Heart left ventricle (tissue), 16 donors: ENCODE measurements at regions of chr10 and their contacts with region 1.

Region 1: GRCh38 chr10:78972947-78973900 is 95.5 kb upstream of the ZMIZ1 start:
- DNase-seq: peak; percentile 86 to 91 (median 89)
- ATAC-seq: peak; percentile 45 to 80 (median 72)
- H3K4me3 ChIP-seq: peak overlapping the region; percentile 11 to 66 (median 54)
- H3K27ac ChIP-seq: peak overlapping the region; percentile 91 to 100 (median 98)
- H3K4me1 ChIP-seq: peaks cover 5 to 45% (median 30%) of the 10 kb centered on the region in 12 donors
- H3K27me3 ChIP-seq: no peaks in the 10 kb centered on the region
- CTCF ChIP-seq: no peak
- POLR2A ChIP-seq: peak in 1 of 2 donors; percentile 73

Region 2: DNA sequence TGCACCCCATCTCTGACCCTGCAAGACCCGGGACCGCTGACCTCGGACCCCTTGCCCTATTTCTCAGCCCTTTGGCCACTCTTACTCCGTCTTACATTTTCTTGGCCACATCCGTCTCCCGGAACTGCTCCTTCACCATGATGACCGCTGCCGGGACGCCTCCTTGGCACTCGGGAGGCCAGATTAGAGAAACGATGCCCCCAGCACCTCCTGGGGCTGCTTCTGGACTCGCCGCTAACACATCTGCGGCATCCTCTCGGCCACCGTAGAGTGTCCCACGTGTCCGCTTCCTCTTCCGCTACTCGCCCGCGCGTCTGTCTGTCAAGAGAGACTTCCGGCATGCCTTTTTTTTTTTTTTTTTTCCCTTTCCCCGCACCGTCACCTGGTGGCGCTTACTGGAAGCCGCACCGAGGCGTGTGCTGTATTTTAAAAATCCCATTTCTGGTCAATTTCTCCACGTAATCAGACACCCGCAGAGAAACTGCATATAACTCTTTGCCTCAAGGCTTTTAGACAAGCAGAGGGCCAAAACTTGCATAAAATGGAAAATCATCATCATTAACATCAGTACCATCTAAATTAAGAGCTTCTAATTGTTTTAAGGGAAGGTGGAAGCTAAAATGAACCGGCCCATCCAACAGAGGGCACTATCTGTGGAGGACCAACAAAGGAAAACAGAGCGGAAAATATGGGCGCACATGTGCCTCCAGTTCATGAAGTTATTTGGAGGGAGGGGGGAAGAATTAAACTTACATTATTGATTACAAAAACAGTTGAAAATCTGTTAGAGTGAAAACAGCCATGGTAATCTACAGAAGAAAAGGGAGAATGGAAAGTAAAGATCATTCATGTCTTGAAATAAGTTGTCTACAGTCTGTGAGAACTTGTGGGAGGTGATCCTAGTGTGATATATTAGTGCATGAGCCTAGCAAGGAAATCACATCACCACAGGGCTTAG is 943.7 kb before region 1 on chr10 and contains the start of gene POLR3A:
- intact Hi-C with region 1: loop called in 1 of 10 experiments (anchors 10 kb)
- DNase-seq: peak; percentile 96 to 99 (median 97)
- ATAC-seq: peak; percentile 68 to 82 (median 76)
- H3K4me3 ChIP-seq: peak within 1 kb of the TSS; percentile 59 to 99 (median 88)
- H3K27ac ChIP-seq: peak within 1 kb of the TSS; percentile 46 to 90 (median 80)
- H3K4me1 ChIP-seq: peaks cover 3 to 29% (median 18%) of the 10 kb centered on the region in 12 donors
- H3K27me3 ChIP-seq: no peaks in the 10 kb centered on the region
- CTCF ChIP-seq: peak; percentile 49 to 86 (median 66)
- POLR2A ChIP-seq: peak in 1 of 2 donors; percentile 40
- total RNA-seq, gene POLR3A: 7.9 to 12.9 (median 9.6) TPM

Region 3: DNA sequence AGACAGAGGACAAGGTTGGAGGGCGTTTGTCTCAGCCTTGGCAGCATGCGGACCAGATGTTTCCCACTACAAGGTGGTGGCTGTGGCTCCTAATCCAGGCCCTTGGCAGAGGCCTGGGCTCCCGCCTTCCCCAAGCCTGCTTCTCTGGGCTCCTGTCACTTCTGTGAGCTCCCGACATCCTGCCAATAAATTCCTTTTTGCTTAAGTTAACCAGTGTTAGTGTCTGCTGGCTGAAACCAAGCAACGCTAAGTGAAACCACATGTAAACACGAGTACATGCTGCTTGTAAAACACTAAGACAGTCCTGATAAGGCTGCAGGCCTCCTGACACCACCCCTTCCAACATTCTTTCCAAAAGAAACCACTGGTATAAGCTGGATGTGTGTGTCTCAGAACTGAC is 168.0 kb before region 1 on chr10:
- intact Hi-C with region 1: loop called in 1 of 10 experiments (anchors 10 kb)
- DNase-seq: peak; percentile 67 to 88 (median 82)
- ATAC-seq: peak; percentile 90 to 93 (median 92)
- H3K4me3 ChIP-seq: no peak overlapping the region
- H3K27ac ChIP-seq: peak overlapping the region; percentile 57 to 87 (median 79)
- H3K4me1 ChIP-seq: peaks cover 0 to 68% (median 43%) of the 10 kb centered on the region in 12 donors
- H3K27me3 ChIP-seq: no peaks in the 10 kb centered on the region
- CTCF ChIP-seq: no peak
- POLR2A ChIP-seq: no peak

Region 4: GRCh38 chr10:78852466-78853240 is 120.6 kb before region 1 on chr10:
- intact Hi-C with region 1: loop called in 1 of 10 experiments (anchors 5 kb)
- DNase-seq: no peak
- ATAC-seq: peak in 1 of 4 donors; percentile 29
- H3K4me3 ChIP-seq: no peak overlapping the region
- H3K27ac ChIP-seq: no peak overlapping the region
- H3K4me1 ChIP-seq: peaks cover 0 to 17% (median 9%) of the 10 kb centered on the region in 12 donors
- H3K27me3 ChIP-seq: no peaks in the 10 kb centered on the region
- CTCF ChIP-seq: peak in 9 of 12 donors; percentile 15 to 45 (median 30)
- POLR2A ChIP-seq: no peak

Region 5: DNA sequence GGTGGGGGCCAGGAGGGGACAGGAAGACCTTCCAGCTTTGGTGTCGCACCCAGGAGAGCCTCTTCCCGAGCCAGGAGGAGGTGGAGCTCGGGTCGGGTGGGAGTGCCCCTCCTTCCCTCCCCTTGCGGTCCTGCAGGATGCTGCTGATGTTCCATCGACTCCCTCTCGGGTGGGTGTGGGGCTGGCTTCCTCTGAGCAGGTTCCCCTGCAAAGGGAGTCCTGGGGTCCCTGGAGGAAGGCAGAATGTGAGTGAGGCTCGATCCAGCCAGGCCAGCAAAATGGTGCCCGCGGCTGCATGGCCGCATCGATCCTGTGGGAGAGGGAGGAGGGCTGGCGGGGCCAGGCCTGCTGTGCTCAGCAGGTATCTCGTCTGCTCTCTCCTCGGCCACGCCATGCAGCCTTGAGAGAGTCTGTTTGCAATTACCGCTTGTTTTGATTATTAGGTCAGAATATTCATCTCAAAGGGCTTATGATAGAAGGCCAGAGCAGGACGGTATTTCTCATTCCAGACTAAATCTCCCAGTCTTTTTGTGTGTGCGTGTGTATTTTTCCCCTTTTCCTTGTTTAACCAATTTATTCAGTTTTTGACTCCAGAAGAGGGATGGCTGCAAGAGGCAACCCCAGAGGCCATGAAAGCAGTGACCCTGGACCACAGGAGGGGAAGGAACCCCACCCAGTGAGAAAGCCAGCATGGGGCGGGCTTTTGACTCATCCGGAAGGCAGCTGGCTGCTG is 41.7 kb before region 1 on chr10:
- intact Hi-C with region 1: loop called in 1 of 10 experiments (anchors 5 kb)
- DNase-seq: peak in 4 of 5 donors; percentile 52 to 77 (median 70)
- ATAC-seq: peak; percentile 62 to 88 (median 80)
- H3K4me3 ChIP-seq: no peak overlapping the region
- H3K27ac ChIP-seq: peak overlapping the region in 10 of 12 donors; percentile 45 to 74 (median 57)
- H3K4me1 ChIP-seq: peaks cover 0 to 22% (median 9%) of the 10 kb centered on the region in 12 donors
- H3K27me3 ChIP-seq: no peaks in the 10 kb centered on the region
- CTCF ChIP-seq: no peak
- POLR2A ChIP-seq: no peak

Region 6: GRCh38 chr10:79022565-79023230 is 49.5 kb after region 1 on chr10:
- intact Hi-C with region 1: no loop called
- DNase-seq: peak; percentile 59 to 83 (median 79)
- ATAC-seq: peak; percentile 58 to 82 (median 71)
- H3K4me3 ChIP-seq: peak overlapping the region in 10 of 12 donors; percentile 5 to 41 (median 34)
- H3K27ac ChIP-seq: peak overlapping the region in 9 of 12 donors; percentile 26 to 88 (median 65)
- H3K4me1 ChIP-seq: peaks cover 0 to 43% (median 11%) of the 10 kb centered on the region in 12 donors
- H3K27me3 ChIP-seq: no peaks in the 10 kb centered on the region
- CTCF ChIP-seq: no peak
- POLR2A ChIP-seq: no peak

Region 7: GRCh38 chr10:79059859-79060379 is 86.7 kb after region 1 on chr10:
- intact Hi-C with region 1: loop called in 4 of 10 experiments (anchors 2 to 10 kb)
- DNase-seq: peak in 2 of 5 donors; percentile 17 to 24
- ATAC-seq: no peak
- H3K4me3 ChIP-seq: no peak overlapping the region
- H3K27ac ChIP-seq: no peak overlapping the region
- H3K4me1 ChIP-seq: peaks cover 0 to 10% (median 4%) of the 10 kb centered on the region in 12 donors
- H3K27me3 ChIP-seq: no peaks in the 10 kb centered on the region
- CTCF ChIP-seq: no peak
- POLR2A ChIP-seq: no peak

Region 8: GRCh38 chr10:79184145-79184625 is 211.0 kb after region 1 on chr10:
- intact Hi-C with region 1: loop called in 1 of 10 experiments (anchors 5 kb)
- DNase-seq: no peak
- ATAC-seq: peak in 3 of 4 donors; percentile 8 to 33 (median 9)
- H3K4me3 ChIP-seq: no peak overlapping the region
- H3K27ac ChIP-seq: peak overlapping the region in 11 of 12 donors; percentile 30 to 79 (median 67)
- H3K4me1 ChIP-seq: peaks cover 40 to 100% (median 95%) of the 10 kb centered on the region in 12 donors
- H3K27me3 ChIP-seq: no peaks in the 10 kb centered on the region
- CTCF ChIP-seq: no peak
- POLR2A ChIP-seq: no peak